ENCODE measurements at regions of chr1 and their contacts with region 1.

Region 1: GRCh38 chr1:110460253-110461220 is 9.6 kb downstream of the PROK1 start:
- DNase-seq: peak; percentile 49 to 83
- ATAC-seq: peak; percentile 93

Region 2: DNA sequence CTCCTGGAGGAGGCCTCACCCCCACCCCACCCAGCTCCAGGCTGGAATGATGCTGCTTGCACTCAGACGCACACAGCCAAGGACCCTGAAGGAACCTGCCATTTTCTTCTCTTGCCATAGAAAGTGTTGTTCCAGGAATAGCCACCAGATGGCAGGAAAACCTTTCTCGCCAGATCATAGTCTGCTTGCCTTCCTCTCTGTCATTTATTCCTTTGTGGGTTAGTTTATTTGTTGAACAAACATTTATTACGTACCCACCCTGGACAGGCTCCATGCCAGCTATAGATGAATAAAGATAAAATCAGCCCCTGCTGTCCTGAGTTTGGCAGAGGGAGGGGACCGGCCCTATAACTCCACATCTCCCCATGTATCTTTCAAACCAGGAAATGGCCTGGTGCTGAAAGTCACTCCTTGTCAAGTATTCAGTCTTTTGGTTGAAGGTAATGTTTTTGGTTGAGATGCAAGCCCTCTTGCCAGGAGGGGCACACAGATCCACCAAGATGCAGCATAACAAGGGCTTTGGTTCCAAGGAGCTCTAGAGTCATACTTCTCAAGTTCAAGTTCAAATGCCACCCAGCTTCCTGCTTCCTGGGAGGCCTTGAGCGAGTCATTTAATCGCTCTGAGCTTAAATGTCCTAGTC is 257.4 kb before region 1 on chr1:
- intact Hi-C with region 1: loop called (anchors 5 to 10 kb)
- DNase-seq: peak; percentile 66 to 76
- ATAC-seq: peak; percentile 85

Region 3: GRCh38 chr1:110209715-110210603 is 250.6 kb before region 1 on chr1 and contains the start of gene KCNC4:
- intact Hi-C with region 1: loop called in 1 of 2 experiments (anchors 10 kb)
- DNase-seq: peak; percentile 92 to 93
- ATAC-seq: peak; percentile 86
- total RNA-seq, gene KCNC4: 7.0 to 8.1 TPM

Region 4: GRCh38 chr1:110312188-110313121 is 148.1 kb before region 1 on chr1:
- intact Hi-C with region 1: loop called in 1 of 2 experiments (anchors 10 kb)
- DNase-seq: peak; percentile 71 to 83
- ATAC-seq: peak; percentile 97

Region 5: GRCh38 chr1:110412576-110412975 is 48.0 kb before region 1 on chr1:
- intact Hi-C with region 1: loop called in 1 of 2 experiments (anchors 5 kb)
- DNase-seq: peak; percentile 42 to 75
- ATAC-seq: peak; percentile 47

Region 6: GRCh38 chr1:110533230-110533629 is 72.7 kb after region 1 on chr1:
- intact Hi-C with region 1: no loop called
- DNase-seq: no peak
- ATAC-seq: no peak

Region 7: DNA sequence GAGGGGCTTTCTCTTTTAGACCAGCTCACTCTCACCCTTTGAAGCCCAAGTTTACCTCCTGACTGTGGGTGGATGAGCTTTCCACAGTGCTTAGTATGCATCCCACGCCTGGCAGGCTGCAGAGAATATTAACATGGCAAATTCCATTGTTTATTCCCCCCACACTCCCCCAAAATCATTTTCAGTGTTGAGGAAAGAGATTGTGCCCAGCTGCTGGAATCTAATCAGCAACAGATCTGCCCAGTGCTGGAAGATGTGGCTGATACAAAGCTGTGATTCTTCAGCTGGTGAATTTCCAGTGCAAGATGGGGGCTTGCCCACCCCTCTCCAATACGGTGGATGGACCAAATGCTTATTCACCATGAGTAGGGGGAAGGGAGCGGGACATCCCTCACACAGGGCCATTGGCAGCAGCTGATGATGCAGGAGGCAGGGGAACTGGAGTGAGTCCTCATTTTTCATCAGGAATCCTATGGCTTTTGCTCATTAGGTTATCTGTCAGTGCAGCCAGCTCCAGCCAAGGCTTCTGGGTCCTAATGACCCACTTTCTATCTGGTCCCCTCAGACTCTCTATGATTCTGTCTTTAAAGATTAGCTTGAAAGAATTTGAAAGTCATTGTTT is 253.9 kb after region 1 on chr1:
- intact Hi-C with region 1: no loop called
- DNase-seq: no peak
- ATAC-seq: no peak

Measured in left colon (tissue), 2 donors.